ENCODE measurements at regions of chr14 and their contacts with region 1.

Region 1: GRCh38 chr14:35617500-35617899 is 83.5 kb downstream of the INSM2 start:
- DNase-seq: no peak
- H3K4me3 ChIP-seq: no peak overlapping the region
- H3K27ac ChIP-seq: no peak overlapping the region
- H3K4me1 ChIP-seq: no peaks in the 10 kb centered on the region
- CTCF ChIP-seq: no peak

Region 2: GRCh38 chr14:35607397-35607796 is 10.1 kb before region 1 on chr14:
- CTCF ChIA-PET with region 1: interaction called, 4 read pairs
- POLR2A ChIA-PET with region 1: interaction called, 13 read pairs
- intact Hi-C with region 1: no loop called
- DNase-seq: no peak
- H3K4me3 ChIP-seq: no peak overlapping the region
- H3K27ac ChIP-seq: no peak overlapping the region
- H3K4me1 ChIP-seq: no peaks in the 10 kb centered on the region
- CTCF ChIP-seq: no peak